ENCODE measurements at regions of chr18 and their contacts with region 1.

Region 1: GRCh38 chr18:12015416-12016062 is 34.2 kb downstream of the IMPA2 start:
- DNase-seq: no peak
- H3K4me3 ChIP-seq: no peak overlapping the region
- CTCF ChIP-seq: no peak

Region 2: DNA sequence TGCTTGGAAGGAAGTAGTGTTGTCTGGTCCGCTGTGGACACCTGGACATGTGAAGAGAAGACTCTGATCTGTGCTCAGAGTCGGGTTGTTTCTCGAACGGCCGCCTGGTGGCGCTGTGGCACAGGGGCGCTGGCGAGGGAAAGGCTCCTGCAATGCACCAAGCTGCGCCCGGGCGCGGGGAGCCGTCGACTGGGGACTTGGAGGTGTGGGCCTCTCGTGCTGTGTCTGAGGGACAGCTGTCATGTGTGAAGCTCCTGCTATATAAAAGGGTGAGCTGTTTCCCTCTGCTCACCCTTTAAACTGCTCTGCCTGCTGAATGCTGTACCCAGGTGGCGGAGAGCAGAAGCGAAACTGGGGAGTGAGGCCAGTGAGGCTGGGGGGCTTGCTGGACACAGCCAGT is 282.5 kb before region 1 on chr18:
- in situ Hi-C with region 1: loop called (anchors 25 kb)
- DNase-seq: peak; percentile 18
- H3K4me3 ChIP-seq: peak overlapping the region; percentile 13
- CTCF ChIP-seq: peak; percentile 94

Region 3: DNA sequence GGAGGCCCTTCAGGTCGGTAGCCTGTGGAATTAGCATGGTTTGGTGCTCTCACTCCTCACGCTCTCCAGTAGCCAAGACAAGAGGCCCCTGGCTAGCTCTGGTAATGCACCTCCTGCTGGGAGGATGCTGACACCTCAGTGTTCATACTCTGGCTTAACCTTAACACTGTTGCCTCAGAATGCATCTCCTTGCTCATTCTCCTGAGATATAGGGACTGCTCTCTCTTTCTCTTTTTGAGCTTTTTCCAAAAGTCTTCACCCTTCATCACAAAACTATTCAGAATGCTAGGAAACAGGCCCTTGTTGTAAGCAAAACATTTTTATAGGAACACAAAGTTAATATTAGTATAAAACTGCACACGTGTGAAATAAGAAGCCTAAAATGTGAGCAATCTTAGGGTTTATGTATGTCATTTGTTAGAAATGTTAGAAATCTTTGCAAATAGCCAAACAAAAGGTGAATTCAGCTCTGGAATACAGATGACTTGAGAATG is 51.5 kb before region 1 on chr18:
- in situ Hi-C with region 1: loop called (anchors 5 kb)
- DNase-seq: no peak
- H3K4me3 ChIP-seq: no peak overlapping the region
- CTCF ChIP-seq: peak; percentile 12

Measured in astrocyte of the cerebellum (primary cell).